Activated CD4-positive, alpha-beta T cell treated with anti-CD3 and anti-CD28 coated beads, Interleukin-2, amount 10 ng/mL, durations not matched to agents 7 days and 5 days (primary cell): ENCODE measurements at regions of chr17 and their contacts with region 1.

Region 1: GRCh38 chr17:49694847-49695683 is 12.7 kb downstream of the SLC35B1 start:
- DNase-seq: peak; percentile 73
- H3K4me3 Mint-ChIP-seq: no peak overlapping the region
- H3K27ac Mint-ChIP-seq: peak overlapping the region; percentile 79
- H3K4me1 Mint-ChIP-seq: peaks cover 42% of the 10 kb centered on the region
- H3K27me3 Mint-ChIP-seq: no peaks in the 10 kb centered on the region

Region 2: DNA sequence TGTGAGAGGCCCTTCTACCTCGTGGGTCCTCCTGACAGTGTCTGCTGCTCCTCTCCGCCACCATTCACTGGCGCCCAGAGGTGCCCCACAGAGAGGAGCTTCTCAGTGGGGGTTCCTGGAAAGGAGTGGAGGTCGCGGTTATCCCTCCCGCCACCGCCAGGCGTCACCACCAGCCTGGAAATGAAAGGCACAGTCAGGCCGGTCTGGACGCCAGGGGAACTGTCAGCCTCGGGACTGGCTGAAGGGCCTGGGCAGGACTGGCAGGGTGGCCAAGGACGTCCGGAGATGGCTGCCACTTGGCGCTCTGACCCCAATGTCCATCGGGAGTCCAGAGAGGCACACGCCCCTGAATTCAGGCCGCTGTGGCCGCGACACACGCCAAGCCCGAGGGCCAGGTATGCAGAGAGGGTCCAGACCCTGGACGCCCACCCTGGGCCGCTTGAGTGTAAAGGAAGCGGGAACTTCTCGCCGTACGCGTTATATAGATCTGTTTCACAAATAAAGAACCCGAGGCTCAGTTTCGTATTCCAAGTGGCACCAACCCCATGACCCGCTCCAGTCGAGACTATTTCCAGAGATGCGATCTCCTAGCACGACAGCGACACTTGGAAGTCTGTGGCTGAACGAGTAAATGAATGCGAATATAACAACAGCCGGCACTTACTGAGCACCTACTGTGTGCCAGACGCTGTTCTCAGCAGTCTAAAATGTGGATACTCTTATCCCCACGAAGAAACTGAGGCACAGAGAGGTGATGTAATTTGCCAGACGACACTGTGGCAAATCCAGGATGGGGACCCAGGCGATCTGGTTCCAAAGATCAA is 127.0 kb before region 1 on chr17:
- CTCF ChIA-PET with region 1: interaction called, 116 read pairs
- POLR2A ChIA-PET with region 1: no interaction called
- DNase-seq: peak; percentile 83
- H3K4me3 Mint-ChIP-seq: peak overlapping the region; percentile 37
- H3K27ac Mint-ChIP-seq: no peak overlapping the region
- H3K4me1 Mint-ChIP-seq: peaks cover 31% of the 10 kb centered on the region
- H3K27me3 Mint-ChIP-seq: peaks cover 32% of the 10 kb centered on the region

Region 3: DNA sequence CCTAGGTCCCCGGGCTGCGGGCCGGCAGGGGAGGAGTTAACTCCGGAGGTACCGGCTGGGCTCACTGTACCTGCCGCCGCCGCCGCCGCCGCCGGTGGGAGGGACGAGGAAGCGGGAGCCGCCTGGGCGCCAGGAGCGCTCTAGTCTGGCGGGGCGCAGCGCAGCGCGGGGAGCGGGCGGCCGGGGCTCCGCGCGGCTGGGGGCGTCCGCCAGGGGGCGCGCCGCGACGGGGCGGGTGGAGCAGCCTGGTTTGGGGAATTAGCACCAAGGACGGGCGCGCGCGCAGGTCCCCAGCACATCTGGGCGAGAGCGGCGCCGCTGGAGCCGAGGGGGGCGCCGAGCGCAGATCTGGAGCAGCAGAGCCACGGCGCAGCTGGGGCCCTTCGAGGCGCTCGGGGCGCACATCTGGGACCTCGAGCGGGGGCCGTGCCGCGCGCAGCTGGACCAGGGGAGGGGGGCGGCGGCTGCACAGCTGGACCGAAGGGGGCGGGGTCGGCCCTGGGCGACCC is 119.4 kb before region 1 on chr17 and contains the start of gene NXPH3:
- CTCF ChIA-PET with region 1: interaction called, 116 read pairs
- POLR2A ChIA-PET with region 1: no interaction called
- DNase-seq: peak; percentile 64
- H3K4me3 Mint-ChIP-seq: peak within 1 kb of the TSS; percentile 57
- H3K27ac Mint-ChIP-seq: no peak within 1 kb of the TSS
- H3K4me1 Mint-ChIP-seq: peaks cover 19% of the 10 kb centered on the region
- H3K27me3 Mint-ChIP-seq: peaks cover 62% of the 10 kb centered on the region
- total RNA-seq, gene NXPH3: not detected

Region 4: GRCh38 chr17:49624896-49625295 is 70.2 kb before region 1 on chr17:
- CTCF ChIA-PET with region 1: no interaction called
- POLR2A ChIA-PET with region 1: no interaction called
- DNase-seq: no peak
- H3K4me3 Mint-ChIP-seq: no peak overlapping the region
- H3K27ac Mint-ChIP-seq: no peak overlapping the region
- H3K4me1 Mint-ChIP-seq: peaks cover 18% of the 10 kb centered on the region
- H3K27me3 Mint-ChIP-seq: no peaks in the 10 kb centered on the region

Region 5: GRCh38 chr17:49638803-49639202 is 56.3 kb before region 1 on chr17:
- CTCF ChIA-PET with region 1: no interaction called
- POLR2A ChIA-PET with region 1: no interaction called
- DNase-seq: no peak
- H3K4me3 Mint-ChIP-seq: no peak overlapping the region
- H3K27ac Mint-ChIP-seq: no peak overlapping the region
- H3K4me1 Mint-ChIP-seq: no peaks in the 10 kb centered on the region
- H3K27me3 Mint-ChIP-seq: no peaks in the 10 kb centered on the region

Region 6: GRCh38 chr17:49680314-49680713 is 14.8 kb before region 1 on chr17:
- CTCF ChIA-PET with region 1: interaction called, 14 read pairs
- POLR2A ChIA-PET with region 1: interaction called, 9 read pairs
- DNase-seq: no peak
- H3K4me3 Mint-ChIP-seq: no peak overlapping the region
- H3K27ac Mint-ChIP-seq: no peak overlapping the region
- H3K4me1 Mint-ChIP-seq: peaks cover 31% of the 10 kb centered on the region
- H3K27me3 Mint-ChIP-seq: peaks cover 2% of the 10 kb centered on the region